ENCODE measurements at regions of chr7 and their contacts with region 1.

Region 1: GRCh38 chr7:100705753-100706671 is at the start of gene POP7:
- DNase-seq: peak; percentile 99
- H3K4me3 ChIP-seq: peak within 1 kb of the TSS; percentile 62 to 92
- H3K27ac ChIP-seq: peak within 1 kb of the TSS; percentile 85 to 89
- H3K4me1 ChIP-seq: peaks cover 6 to 14% of the 10 kb centered on the region in 2 experiments; a peak in 2 of 4 replicates
- H3K27me3 ChIP-seq: peaks cover 3% of the 10 kb centered on the region; the same call in 1 of the 2 replicates
- CTCF ChIP-seq: no peak
- EP300 ChIP-seq: no peak
- RAD21 ChIP-seq: no peak
- polyA plus RNA-seq, gene POP7: 63.8 and 81.8 TPM in 2 replicates

Region 2: DNA sequence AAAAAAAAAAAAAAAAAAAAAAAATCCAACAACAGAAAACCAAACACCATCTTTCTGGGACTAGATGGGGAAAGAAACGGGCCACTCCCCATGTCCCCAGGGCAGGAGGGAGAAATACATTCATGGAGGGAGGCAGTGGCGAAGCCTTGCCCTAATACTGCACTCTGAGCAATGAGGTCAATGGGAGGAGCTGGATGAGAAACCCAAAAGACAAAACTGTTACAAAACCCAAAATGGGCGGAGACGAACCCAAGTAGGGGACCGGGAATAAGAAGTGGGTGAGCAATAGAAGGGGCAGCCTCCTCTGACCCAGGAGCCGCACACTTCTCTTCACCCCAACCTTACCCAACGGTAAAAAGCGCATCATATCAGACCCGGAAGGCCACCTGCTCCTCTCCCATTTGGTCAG is 25.8 kb before region 1 on chr7:
- CTCF ChIA-PET with region 1: interaction called, 23 read pairs
- POLR2A ChIA-PET with region 1: interaction called, 5 read pairs
- DNase-seq: peak; percentile 44
- H3K4me3 ChIP-seq: no peak overlapping the region
- H3K27ac ChIP-seq: no peak overlapping the region; a peak in 1 of 4 replicates
- H3K4me1 ChIP-seq: peaks cover 0 to 35% of the 10 kb centered on the region in 2 experiments; a peak in 1 of 4 replicates
- H3K27me3 ChIP-seq: no peaks in the 10 kb centered on the region
- CTCF ChIP-seq: no peak
- EP300 ChIP-seq: no peak
- RAD21 ChIP-seq: no peak

Region 3: GRCh38 chr7:100719523-100720319 is 13.7 kb after region 1 on chr7:
- CTCF ChIA-PET with region 1: interaction called, 344 read pairs
- POLR2A ChIA-PET with region 1: interaction called, 9 read pairs
- DNase-seq: no peak
- H3K4me3 ChIP-seq: 0 out of 4 replicates have a peak overlapping the region, but pooled peaks of 1 of the 2 experiments have one; percentile 29
- H3K27ac ChIP-seq: no peak overlapping the region
- H3K4me1 ChIP-seq: peaks cover 0 to 3% of the 10 kb centered on the region in 2 experiments; a peak in 1 of 4 replicates
- H3K27me3 ChIP-seq: peaks cover 28% of the 10 kb centered on the region
- CTCF ChIP-seq: peak; percentile 47
- EP300 ChIP-seq: no peak
- RAD21 ChIP-seq: peak; percentile 56

Region 4: DNA sequence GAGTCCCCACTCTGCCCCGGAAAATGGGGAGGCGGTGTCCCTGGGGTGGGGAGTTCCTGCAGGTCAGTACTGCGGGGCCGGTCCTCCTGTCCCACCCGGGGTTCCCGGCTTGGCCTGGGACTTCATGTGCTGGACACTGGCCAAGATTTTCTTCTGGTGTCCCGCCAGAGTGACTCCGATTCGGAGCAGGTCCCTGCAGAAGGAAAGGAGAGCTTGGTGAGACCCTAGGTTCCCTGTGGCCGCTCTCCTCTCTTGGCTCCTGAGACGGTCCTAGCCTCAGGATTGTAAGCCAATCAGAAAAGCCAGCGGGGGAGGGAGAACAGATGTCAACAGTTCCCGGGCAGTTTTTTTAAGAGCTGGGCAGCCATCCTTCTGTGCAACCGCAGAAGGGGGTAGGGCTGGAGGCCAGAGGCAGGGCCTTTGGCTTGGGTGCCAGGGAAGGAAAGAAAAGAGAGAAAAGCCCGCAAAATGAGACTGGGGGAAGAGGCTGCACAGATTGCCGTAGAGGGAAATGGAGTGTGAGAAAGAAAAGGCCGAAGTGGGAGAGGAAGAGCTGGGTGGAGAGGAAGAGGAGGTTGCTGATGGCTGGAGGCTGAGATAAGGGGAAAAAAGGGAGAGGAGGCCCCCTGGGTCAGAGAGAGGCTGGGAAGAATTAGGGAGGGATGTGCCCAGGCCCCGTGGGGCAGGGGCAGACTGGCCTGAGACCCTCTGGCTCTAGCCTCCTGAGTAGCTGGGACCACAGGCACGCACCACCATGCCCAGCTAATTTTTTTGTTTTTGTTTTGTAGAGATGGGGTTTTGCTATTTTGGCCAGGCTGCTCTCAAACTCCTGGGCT is 97.6 kb after region 1 on chr7:
- CTCF ChIA-PET with region 1: interaction called, 35 read pairs
- POLR2A ChIA-PET with region 1: interaction called, 3 read pairs
- DNase-seq: peak; percentile 93
- H3K4me3 ChIP-seq: no peak overlapping the region
- H3K27ac ChIP-seq: peak overlapping the region; percentile 53 to 58
- H3K4me1 ChIP-seq: peaks cover 21% of the 10 kb centered on the region in 2 experiments; a peak in 3 of 4 replicates
- H3K27me3 ChIP-seq: no peaks in the 10 kb centered on the region
- CTCF ChIP-seq: no peak
- EP300 ChIP-seq: peak in 1 of 2 experiments; percentile 26; a peak in 1 of 4 replicates
- RAD21 ChIP-seq: no peak

Region 5: DNA sequence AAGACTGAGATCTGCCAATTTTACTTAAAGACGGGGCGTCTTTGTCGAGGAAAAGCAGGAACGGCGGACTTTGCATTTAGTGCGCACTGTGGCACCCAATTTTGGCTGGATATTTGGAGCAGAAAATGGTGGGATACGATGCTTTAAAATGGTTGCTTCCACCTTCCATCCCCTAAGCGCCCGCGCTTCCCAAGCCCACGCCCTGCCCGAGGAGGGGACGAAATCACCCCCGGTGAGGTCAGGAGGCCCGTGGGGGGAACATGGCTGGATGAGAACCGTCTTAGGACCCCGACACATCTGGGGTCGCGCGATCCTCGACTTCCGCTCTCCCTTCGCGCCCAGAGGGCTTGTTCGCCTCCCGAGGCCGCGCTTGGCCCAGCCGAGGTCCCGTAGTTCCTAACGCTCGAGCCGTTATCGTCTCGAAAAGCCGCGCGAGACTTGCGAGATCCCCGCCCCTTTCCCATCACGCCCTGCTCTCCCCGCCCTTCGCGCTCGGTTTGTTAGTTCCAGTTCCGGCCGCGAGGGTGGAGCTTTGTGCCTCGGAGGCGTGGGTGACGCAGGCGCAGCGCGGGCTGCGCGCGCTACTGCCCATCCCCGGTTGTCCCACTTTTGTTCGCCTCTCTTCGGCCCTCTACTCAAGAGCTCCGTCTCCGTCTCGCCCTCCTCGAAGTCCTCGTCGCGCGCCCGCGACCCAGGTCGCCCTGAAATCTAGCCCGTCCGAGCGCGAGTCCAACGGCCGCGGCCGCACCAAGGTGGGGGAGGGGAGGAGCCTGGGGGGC is 168.8 kb after region 1 on chr7 and contains the start of gene SRRT:
- CTCF ChIA-PET with region 1: interaction called, 8 read pairs
- POLR2A ChIA-PET with region 1: interaction called, 13 read pairs
- DNase-seq: peak; percentile 100
- H3K4me3 ChIP-seq: peak within 1 kb of the TSS; percentile 65 to 93
- H3K27ac ChIP-seq: peak within 1 kb of the TSS; percentile 92 to 95
- H3K4me1 ChIP-seq: peaks cover 13 to 23% of the 10 kb centered on the region in 2 experiments; a peak in 3 of 4 replicates
- H3K27me3 ChIP-seq: no peaks in the 10 kb centered on the region
- CTCF ChIP-seq: no peak
- EP300 ChIP-seq: peak; percentile 24 to 38; a peak in 2 of 4 replicates
- RAD21 ChIP-seq: no peak
- polyA plus RNA-seq, gene SRRT: 76.5 and 92.7 TPM in 2 replicates

Measured in SK-N-SH (cell line).